ENCODE measurements at regions of chr1 and their contacts with region 1.

Region 1: DNA sequence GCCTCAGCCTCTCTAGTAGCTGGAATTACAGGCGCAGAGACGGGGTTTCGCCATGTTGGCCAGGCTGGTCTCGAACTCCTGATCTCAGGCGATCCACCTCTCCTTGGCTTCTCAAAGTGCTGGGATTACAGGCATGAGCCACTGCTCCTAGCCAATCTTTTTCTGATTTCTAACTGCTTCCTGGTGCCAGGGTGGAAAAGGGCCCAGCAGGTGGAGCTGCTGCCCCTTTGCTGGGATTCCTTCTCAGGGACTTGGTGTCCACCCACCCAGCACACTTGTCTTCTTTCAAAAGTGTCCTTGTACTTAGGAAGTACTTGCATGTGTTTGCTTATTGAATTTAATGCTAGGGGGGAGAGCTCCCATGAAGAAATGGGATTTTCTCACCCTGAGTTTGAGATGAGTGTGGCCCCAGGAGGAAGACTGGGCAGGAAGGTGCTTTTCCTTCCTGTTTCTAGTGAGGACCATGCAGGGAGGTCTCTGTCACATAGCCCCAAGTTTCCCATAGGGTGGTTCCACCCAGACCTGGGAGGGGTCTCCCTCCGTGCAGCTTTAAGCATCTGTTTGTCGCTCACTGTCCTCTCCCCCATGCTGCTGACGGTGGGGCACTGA is 14.2 kb downstream of the UTP11 start:
- DNase-seq: peak in 2 of 4 experiments; percentile 58 to 65
- ATAC-seq: peak; percentile 69
- H3K4me3 ChIP-seq: no peak overlapping the region
- H3K27ac ChIP-seq: no peak overlapping the region
- H3K4me1 ChIP-seq: peaks cover 10 to 34% of the 10 kb centered on the region in 2 experiments; a peak in 4 of 5 replicates
- H3K27me3 ChIP-seq: no peaks in the 10 kb centered on the region
- CTCF ChIP-seq: peak; percentile 67 to 82 (median 77)
- EP300 ChIP-seq: no peak
- POLR2A ChIP-seq: no peak; the same call in 1 of the 2 replicates
- RAD21 ChIP-seq: peak; percentile 70 to 74

Region 2: GRCh38 chr1:38061883-38062328 is 35.2 kb after region 1 on chr1:
- CTCF ChIA-PET with region 1: no interaction called
- POLR2A ChIA-PET with region 1: no interaction called
- in situ Hi-C with region 1: no loop called
- intact Hi-C with region 1: no loop called
- DNase-seq: no peak
- ATAC-seq: no peak
- H3K4me3 ChIP-seq: no peak overlapping the region
- H3K27ac ChIP-seq: no peak overlapping the region
- H3K4me1 ChIP-seq: peaks cover 12 to 21% of the 10 kb centered on the region in 2 experiments; a peak in 4 of 5 replicates
- H3K27me3 ChIP-seq: peaks cover 0 to 12% of the 10 kb centered on the region in 2 experiments; a peak in 2 of 5 replicates
- CTCF ChIP-seq: no peak
- EP300 ChIP-seq: no peak
- POLR2A ChIP-seq: no peak
- RAD21 ChIP-seq: no peak

Region 3: GRCh38 chr1:38500352-38500751 is 473.7 kb after region 1 on chr1:
- CTCF ChIA-PET with region 1: no interaction called
- POLR2A ChIA-PET with region 1: interaction called, 5 read pairs
- in situ Hi-C with region 1: no loop called
- intact Hi-C with region 1: loop called (anchors 10 kb)
- DNase-seq: peak in 2 of 4 experiments; percentile 58 to 61
- ATAC-seq: peak; percentile 80
- H3K4me3 ChIP-seq: no peak overlapping the region
- H3K27ac ChIP-seq: no peak overlapping the region
- H3K4me1 ChIP-seq: no peaks in the 10 kb centered on the region
- H3K27me3 ChIP-seq: peaks cover 0 to 3% of the 10 kb centered on the region in 2 experiments; a peak in 4 of 5 replicates
- CTCF ChIP-seq: peak in 2 of 3 experiments; percentile 59 to 62; a peak in 4 of 6 replicates
- EP300 ChIP-seq: no peak
- POLR2A ChIP-seq: no peak
- RAD21 ChIP-seq: peak in 1 of 2 experiments; percentile 41; a peak in 1 of 4 replicates

Measured in K562 (cell line).